ENCODE measurements at regions of chr19 and their contacts with region 1.

Region 1: GRCh38 chr19:16417660-16418596 is 53.8 kb downstream of the EPS15L1 start:
- DNase-seq: peak; percentile 69
- H3K4me3 Mint-ChIP-seq: no peak overlapping the region
- H3K27ac Mint-ChIP-seq: no peak overlapping the region
- H3K4me1 Mint-ChIP-seq: peaks cover 8% of the 10 kb centered on the region
- H3K27me3 Mint-ChIP-seq: no peaks in the 10 kb centered on the region

Region 2: GRCh38 chr19:16382775-16383543 is 35.0 kb before region 1 on chr19:
- CTCF ChIA-PET with region 1: interaction called, 10 read pairs
- intact Hi-C with region 1: loop called (anchors 2 kb)
- DNase-seq: peak; percentile 89
- H3K4me3 Mint-ChIP-seq: no peak overlapping the region
- H3K27ac Mint-ChIP-seq: no peak overlapping the region
- H3K4me1 Mint-ChIP-seq: peaks cover 45% of the 10 kb centered on the region
- H3K27me3 Mint-ChIP-seq: no peaks in the 10 kb centered on the region

Region 3: GRCh38 chr19:17605761-17606745 is 1188.1 kb after region 1 on chr19:
- CTCF ChIA-PET with region 1: no interaction called
- intact Hi-C with region 1: no loop called
- DNase-seq: peak; percentile 79
- H3K4me3 Mint-ChIP-seq: peak overlapping the region; percentile 69
- H3K27ac Mint-ChIP-seq: peak overlapping the region; percentile 56
- H3K4me1 Mint-ChIP-seq: peaks cover 4% of the 10 kb centered on the region
- H3K27me3 Mint-ChIP-seq: peaks cover 25% of the 10 kb centered on the region

Measured in activated naive CD4-positive, alpha-beta T cell treated with anti-CD3 and anti-CD28 coated beads for 36 hours (primary cell).